ENCODE measurements at regions of chr7 and their contacts with region 1.

Region 1: GRCh38 chr7:87398446-87398845 is 53.0 kb downstream of the CROT start:
- DNase-seq: no peak
- ATAC-seq: no peak
- H3K4me3 ChIP-seq: no peak overlapping the region
- H3K27ac ChIP-seq: no peak overlapping the region
- H3K4me1 ChIP-seq: peaks cover 6% of the 10 kb centered on the region; the same call in 2 of the 3 replicates
- CTCF ChIP-seq: no peak
- EP300 ChIP-seq: no peak
- POLR2A ChIP-seq: no peak
- RAD21 ChIP-seq: no peak

Region 2: GRCh38 chr7:87416682-87417587 is 18.5 kb after region 1 on chr7:
- CTCF ChIA-PET with region 1: interaction called, 18 read pairs
- POLR2A ChIA-PET with region 1: no interaction called
- DNase-seq: peak in 1 of 2 experiments; percentile 67
- ATAC-seq: peak; percentile 49 to 85; a peak in 3 of 6 replicates
- H3K4me3 ChIP-seq: no peak overlapping the region
- H3K27ac ChIP-seq: no peak overlapping the region
- H3K4me1 ChIP-seq: peaks cover 20% of the 10 kb centered on the region; the same call in 2 of the 3 replicates
- CTCF ChIP-seq: peak; percentile 92
- EP300 ChIP-seq: no peak
- POLR2A ChIP-seq: no peak
- RAD21 ChIP-seq: peak; percentile 92 to 95